Adrenal gland (tissue), 19 donors: ENCODE measurements at regions of chr4 and their contacts with region 1.

Region 1: DNA sequence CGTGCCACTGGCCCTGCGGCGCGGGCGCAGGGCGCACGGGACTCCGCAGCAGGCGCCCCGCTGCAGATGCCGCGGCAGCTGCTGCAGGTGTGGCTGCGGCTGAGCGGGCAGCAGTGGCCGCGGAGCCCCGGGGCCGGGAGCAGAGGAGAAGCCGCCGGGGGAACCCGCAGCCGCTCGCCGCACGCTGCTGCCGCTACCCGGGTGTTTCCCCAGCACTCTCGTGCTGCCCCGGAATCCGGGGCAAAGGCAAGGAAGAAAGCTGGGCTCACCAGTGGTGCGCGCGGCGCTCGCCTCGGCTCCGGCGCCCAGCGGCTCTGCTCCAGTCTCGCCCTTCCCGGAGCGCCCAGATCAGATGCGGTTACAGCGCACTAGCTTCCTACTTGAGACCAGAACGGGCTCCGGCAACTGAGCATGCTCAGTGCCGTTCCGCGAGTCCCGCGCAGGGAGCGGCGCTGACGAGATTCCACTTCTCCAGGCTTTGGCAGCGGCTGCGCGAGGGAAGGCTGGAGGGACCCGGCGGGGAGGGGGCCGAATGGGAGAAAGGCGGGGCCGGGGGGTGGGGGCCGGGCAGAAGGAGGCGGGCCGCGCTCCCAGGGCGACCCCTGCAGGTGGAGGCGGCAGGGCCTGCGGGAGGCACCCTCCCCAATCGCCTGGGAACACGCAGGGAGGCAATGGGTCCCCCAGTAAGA is at the start of gene APBB2:
- DNase-seq: peak; percentile 93 to 97 (median 96)
- H3K4me3 ChIP-seq: peak within 1 kb of the TSS; percentile 56 to 89 (median 77)
- H3K27ac ChIP-seq: peak within 1 kb of the TSS in 4 of 5 donors; percentile 60 to 89 (median 82)
- H3K4me1 ChIP-seq: peaks cover 4 to 30% of the 10 kb centered on the region in 2 donors
- H3K27me3 ChIP-seq: no peaks in the 10 kb centered on the region
- CTCF ChIP-seq: peak; percentile 49 to 83 (median 62)
- POLR2A ChIP-seq: peak; percentile 82 to 95
- total RNA-seq, gene APBB2: 29.9 to 135 (median 44.4) TPM

Region 2: DNA sequence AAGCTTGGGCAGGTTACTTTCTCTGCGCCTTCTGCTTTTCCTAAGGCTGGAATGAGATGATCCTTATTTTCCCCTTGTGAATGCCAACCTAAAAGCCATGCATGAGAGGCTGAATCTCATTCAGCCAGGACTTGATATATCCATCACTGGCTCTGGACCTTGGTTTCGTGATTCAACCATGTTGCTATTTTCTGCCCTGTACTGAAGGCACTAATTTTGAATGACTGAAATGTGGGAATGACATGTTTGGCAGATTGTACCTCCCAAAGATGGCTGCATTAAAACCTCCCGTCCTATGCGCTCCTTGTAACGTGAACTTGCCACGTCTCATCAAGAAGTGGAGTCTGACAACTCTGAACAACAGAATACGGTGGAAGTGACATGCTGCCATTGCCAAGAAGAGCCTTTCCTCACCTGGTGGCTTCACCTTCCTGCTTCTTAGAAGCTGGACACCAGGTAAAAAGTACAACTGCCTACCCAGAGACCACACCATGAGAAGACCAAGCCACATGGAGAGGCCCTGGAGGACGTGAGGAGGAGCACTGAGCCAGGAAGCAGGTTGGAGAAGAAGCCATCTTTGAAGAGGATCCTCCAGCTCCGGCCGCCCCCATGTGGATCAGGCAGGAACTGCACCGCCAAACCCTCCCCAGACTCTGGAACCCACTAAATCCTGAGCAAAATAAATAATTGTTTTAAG is 290.0 kb before region 1 on chr4:
- intact Hi-C with region 1: loop called (anchors 5 kb)
- DNase-seq: peak; percentile 61 to 84 (median 67)
- H3K4me3 ChIP-seq: no peak overlapping the region
- H3K27ac ChIP-seq: no peak overlapping the region
- H3K4me1 ChIP-seq: peaks cover 0 to 6% of the 10 kb centered on the region in 2 donors
- H3K27me3 ChIP-seq: no peaks in the 10 kb centered on the region
- CTCF ChIP-seq: peak; percentile 76 to 87 (median 80)
- POLR2A ChIP-seq: no peak

Region 3: GRCh38 chr4:40976343-40976742 is 237.9 kb before region 1 on chr4:
- intact Hi-C with region 1: loop called (anchors 2 to 5 kb)
- DNase-seq: peak; percentile 24 to 70 (median 46)
- H3K4me3 ChIP-seq: no peak overlapping the region
- H3K27ac ChIP-seq: no peak overlapping the region
- H3K4me1 ChIP-seq: no peaks in the 10 kb centered on the region
- H3K27me3 ChIP-seq: no peaks in the 10 kb centered on the region
- CTCF ChIP-seq: peak; percentile 65 to 78 (median 74)
- POLR2A ChIP-seq: no peak